Dendritic cell treated with granulocyte-macrophage colony-stimulating factor and Interleukin-4, amounts not matched to agents 40 ng/mL and 50 ng/mL, for 4 days (primary cell): ENCODE measurements at regions of chr3 and their contacts with region 1.

Region 1: GRCh38 chr3:42780892-42781700 is 8.0 kb upstream of the CCDC13 start:
- H3K4me3 Mint-ChIP-seq: no peak overlapping the region
- H3K27ac Mint-ChIP-seq: no peak overlapping the region
- H3K4me1 Mint-ChIP-seq: peaks cover 10% of the 10 kb centered on the region
- H3K27me3 Mint-ChIP-seq: no peaks in the 10 kb centered on the region

Region 2: GRCh38 chr3:42831321-42831713 is 50.2 kb after region 1 on chr3:
- intact Hi-C with region 1: loop called (anchors 2 kb)
- H3K4me3 Mint-ChIP-seq: no peak overlapping the region
- H3K27ac Mint-ChIP-seq: no peak overlapping the region
- H3K4me1 Mint-ChIP-seq: no peaks in the 10 kb centered on the region
- H3K27me3 Mint-ChIP-seq: peaks cover 2% of the 10 kb centered on the region

Region 3: DNA sequence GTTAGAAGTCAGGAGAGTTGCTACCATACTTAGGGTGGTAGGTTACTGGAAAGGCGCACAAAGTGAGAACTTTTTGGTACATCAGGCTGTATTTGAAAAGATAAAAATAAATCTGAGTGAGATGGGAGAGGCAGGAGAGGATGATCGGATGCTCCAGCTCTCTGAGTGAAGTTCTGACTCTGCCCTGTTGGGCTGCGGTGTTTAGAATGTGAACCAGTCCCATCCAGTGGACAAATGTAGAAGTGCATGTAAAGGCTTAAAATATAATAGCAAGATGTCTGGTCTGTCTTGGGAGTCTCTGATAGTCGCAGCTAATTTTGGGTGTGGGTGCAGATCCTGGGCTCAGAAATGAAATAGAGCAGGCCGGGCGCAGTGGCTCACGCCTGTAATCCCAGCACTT is 58.5 kb after region 1 on chr3:
- intact Hi-C with region 1: loop called (anchors 2 kb)
- H3K4me3 Mint-ChIP-seq: no peak overlapping the region
- H3K27ac Mint-ChIP-seq: no peak overlapping the region
- H3K4me1 Mint-ChIP-seq: peaks cover 8% of the 10 kb centered on the region
- H3K27me3 Mint-ChIP-seq: no peaks in the 10 kb centered on the region

Region 4: DNA sequence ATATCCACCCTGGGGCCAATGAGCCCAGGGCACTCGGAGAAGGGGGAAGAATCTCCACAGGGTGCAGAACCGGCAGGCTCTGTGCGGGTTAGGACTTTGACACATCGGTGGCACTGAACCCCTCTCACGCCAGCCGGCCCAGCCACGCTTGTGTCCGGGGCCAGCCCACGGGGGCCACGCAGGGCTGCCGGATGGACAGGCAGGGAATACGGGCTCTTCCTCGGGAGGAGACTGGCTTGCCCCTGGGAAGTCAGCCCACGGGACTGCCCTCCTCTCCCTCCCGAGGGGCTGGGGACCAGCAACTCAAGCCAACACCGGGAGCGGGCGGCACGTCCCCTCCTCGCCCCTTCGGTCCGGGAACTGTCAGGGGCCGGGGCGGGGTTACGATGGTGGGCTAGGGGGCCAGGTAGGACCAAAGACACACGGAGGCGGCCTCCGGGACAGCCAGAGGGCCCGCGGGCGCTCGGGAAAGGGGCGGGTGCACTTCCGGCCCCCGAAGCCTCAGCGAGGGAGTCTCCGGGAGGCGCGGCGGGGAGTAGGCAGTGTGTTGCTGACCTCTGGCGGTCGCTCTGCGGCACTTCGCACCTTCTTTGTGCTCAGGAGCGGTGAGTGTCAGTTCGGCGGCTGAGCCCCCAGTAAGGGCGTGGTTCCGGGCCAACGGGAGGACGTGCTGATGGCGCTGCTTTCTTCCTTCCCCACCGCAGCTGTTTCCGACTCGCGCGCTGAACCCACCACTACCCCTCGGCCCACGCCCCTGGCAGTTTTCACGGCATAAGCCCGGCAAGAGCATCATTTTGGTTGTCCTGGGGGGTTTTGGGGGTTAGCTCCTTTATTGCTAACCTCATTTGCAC is 99.7 kb after region 1 on chr3:
- intact Hi-C with region 1: loop called (anchors 1 kb)
- H3K4me3 Mint-ChIP-seq: peak overlapping the region; percentile 73
- H3K27ac Mint-ChIP-seq: peak overlapping the region; percentile 68
- H3K4me1 Mint-ChIP-seq: peaks cover 12% of the 10 kb centered on the region
- H3K27me3 Mint-ChIP-seq: peaks cover 19% of the 10 kb centered on the region